ENCODE measurements at regions of chr11 and their contacts with region 1.

Region 1: DNA sequence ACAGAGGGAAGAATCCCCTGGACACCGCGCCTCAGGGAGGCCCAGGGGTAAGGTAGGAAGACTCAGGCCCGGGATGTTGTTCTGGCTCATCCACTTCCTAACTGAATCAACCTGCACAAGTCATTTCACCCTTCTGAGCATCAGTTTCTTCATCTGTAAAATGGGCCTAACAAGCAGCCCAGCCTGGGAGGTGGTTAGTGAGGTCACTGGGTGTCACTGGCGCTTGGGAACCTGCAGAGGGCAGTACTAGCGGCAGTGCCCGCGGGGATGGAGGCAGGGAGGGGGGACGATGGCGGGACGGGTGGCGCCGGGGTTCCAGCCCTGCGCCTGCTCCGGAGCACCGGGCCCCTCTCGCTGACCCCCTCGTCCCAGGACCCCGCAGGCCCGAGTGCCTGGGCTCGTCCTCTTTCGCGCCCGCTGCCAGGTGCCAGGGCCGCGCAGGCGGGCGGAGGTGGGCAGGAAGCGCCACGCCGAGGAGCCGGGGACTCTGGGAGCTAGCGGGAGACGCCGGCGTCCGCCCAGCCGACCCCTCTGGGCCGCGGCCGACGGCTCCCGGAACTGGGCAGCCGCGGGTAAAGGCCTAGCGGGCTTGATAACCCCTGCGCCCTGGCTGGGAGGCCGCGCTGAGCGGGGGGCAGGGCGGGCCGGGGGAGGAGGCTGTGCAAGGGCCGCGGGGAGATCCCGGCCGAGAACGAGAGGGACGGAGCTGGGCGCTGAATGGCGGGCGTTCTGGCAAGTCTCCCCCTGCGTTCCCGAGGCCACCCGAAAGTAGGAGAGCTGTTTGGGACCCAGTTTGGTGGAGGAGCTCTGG is at the start of gene NLRX1:
- DNase-seq: peak; percentile 91
- H3K4me3 Mint-ChIP-seq: peak within 1 kb of the TSS; percentile 89
- H3K27ac Mint-ChIP-seq: peak within 1 kb of the TSS; percentile 82
- H3K4me1 Mint-ChIP-seq: peaks cover 11% of the 10 kb centered on the region
- H3K27me3 Mint-ChIP-seq: no peaks in the 10 kb centered on the region
- total RNA-seq, gene NLRX1: 18.4 to 18.7 TPM

Region 2: DNA sequence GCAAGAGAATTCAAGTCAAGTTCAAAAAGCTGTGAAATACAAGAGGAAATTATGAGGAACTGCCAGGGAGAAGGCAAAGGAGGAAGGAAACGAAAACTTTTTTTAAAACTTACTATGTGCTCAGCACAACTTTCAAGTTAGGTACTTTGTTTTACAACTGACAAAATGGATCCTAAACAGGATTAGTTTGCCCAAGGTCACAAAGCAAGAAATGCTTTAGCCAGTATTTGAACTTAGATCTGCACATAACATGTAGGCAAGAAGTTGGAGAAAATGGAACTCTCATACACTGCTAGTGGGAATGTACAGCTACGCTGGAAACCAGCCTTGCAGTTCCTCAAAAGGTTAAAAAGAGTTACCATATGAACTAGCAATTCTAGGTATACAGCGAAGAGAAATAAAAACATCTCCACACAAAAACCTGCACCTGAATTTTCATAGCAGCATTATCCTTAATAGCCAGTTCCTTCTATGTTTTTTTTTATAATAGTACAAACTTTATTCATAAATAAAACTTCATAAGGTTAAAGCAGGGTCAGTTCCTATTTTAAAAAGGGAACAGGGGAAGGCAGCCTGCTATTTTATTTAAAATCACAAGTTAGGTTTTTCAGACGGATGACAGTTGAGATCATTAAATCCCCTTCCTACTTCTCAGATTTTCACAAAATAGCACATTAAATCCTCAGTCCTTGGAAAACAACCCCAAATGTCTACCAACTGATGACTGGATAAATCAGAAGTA is 397.0 kb before region 1 on chr11:
- CTCF ChIA-PET with region 1: no interaction called
- POLR2A ChIA-PET with region 1: no interaction called
- intact Hi-C with region 1: no loop called
- DNase-seq: no peak
- H3K4me3 Mint-ChIP-seq: no peak overlapping the region
- H3K27ac Mint-ChIP-seq: peak overlapping the region; percentile 64
- H3K4me1 Mint-ChIP-seq: peaks cover 83% of the 10 kb centered on the region
- H3K27me3 Mint-ChIP-seq: no peaks in the 10 kb centered on the region

Region 3: GRCh38 chr11:119134389-119134978 is 34.2 kb before region 1 on chr11:
- CTCF ChIA-PET with region 1: no interaction called
- POLR2A ChIA-PET with region 1: no interaction called
- intact Hi-C with region 1: no loop called
- DNase-seq: no peak
- H3K4me3 Mint-ChIP-seq: no peak overlapping the region
- H3K27ac Mint-ChIP-seq: no peak overlapping the region
- H3K4me1 Mint-ChIP-seq: no peaks in the 10 kb centered on the region
- H3K27me3 Mint-ChIP-seq: no peaks in the 10 kb centered on the region

Region 4: GRCh38 chr11:119144825-119145486 is 23.7 kb before region 1 on chr11:
- CTCF ChIA-PET with region 1: interaction called, 12 read pairs
- POLR2A ChIA-PET with region 1: no interaction called
- intact Hi-C with region 1: no loop called
- DNase-seq: peak; percentile 54
- H3K4me3 Mint-ChIP-seq: no peak overlapping the region
- H3K27ac Mint-ChIP-seq: no peak overlapping the region
- H3K4me1 Mint-ChIP-seq: peaks cover 7% of the 10 kb centered on the region
- H3K27me3 Mint-ChIP-seq: peaks cover 24% of the 10 kb centered on the region

Region 5: GRCh38 chr11:119157063-119157462 is 11.6 kb before region 1 on chr11:
- CTCF ChIA-PET with region 1: interaction called, 19 read pairs
- POLR2A ChIA-PET with region 1: interaction called, 4 read pairs
- intact Hi-C with region 1: no loop called
- DNase-seq: no peak
- H3K4me3 Mint-ChIP-seq: no peak overlapping the region
- H3K27ac Mint-ChIP-seq: no peak overlapping the region
- H3K4me1 Mint-ChIP-seq: no peaks in the 10 kb centered on the region
- H3K27me3 Mint-ChIP-seq: no peaks in the 10 kb centered on the region

Region 6: GRCh38 chr11:119196833-119197483 is 28.3 kb after region 1 on chr11:
- CTCF ChIA-PET with region 1: interaction called, 37 read pairs
- POLR2A ChIA-PET with region 1: no interaction called
- intact Hi-C with region 1: loop called (anchors 1 kb)
- DNase-seq: peak; percentile 72
- H3K4me3 Mint-ChIP-seq: no peak overlapping the region
- H3K27ac Mint-ChIP-seq: no peak overlapping the region
- H3K4me1 Mint-ChIP-seq: peaks cover 3% of the 10 kb centered on the region
- H3K27me3 Mint-ChIP-seq: no peaks in the 10 kb centered on the region

Measured in activated CD4-positive, alpha-beta memory T cell treated with anti-CD3 and anti-CD28 coated beads for 36 hours (primary cell).